ENCODE measurements at regions of chr16 and their contacts with region 1.

Region 1: DNA sequence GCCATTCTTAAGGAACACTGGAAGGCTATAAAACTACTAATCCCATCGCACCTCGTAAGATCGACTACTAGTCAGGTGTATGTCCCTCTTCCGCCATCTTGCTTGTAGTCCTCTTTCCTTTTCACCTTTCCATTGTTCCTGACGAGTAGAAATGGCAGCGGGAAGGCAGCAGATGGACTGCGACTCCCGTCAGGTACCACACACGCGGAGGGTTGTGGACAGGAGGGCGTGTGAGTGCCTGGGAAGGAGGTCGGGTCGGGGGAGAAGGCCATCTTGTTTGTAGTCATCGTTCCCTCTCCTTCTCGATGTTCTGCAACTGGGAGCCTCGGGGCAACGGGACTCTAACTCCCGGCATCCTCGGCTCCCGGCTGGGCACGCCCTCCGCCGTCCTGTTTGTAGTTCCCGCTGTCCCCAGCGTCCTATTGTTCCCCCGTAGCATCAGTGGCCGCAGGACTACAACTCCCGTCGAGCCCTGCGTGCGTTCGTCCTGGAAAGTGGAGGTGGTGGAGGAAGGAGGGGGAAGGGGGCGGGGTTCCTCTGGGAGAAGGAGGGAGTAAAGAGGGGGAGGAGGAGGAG is 324 bp upstream of the FBXL19 start:
- DNase-seq: peak; percentile 100
- H3K4me3 ChIP-seq: peak overlapping the region; percentile 54 to 76 (median 70)
- H3K27ac ChIP-seq: peak overlapping the region; percentile 94
- H3K4me1 ChIP-seq: peaks cover 11% of the 10 kb centered on the region
- H3K27me3 ChIP-seq: no peaks in the 10 kb centered on the region
- CTCF ChIP-seq: no peak

Region 2: DNA sequence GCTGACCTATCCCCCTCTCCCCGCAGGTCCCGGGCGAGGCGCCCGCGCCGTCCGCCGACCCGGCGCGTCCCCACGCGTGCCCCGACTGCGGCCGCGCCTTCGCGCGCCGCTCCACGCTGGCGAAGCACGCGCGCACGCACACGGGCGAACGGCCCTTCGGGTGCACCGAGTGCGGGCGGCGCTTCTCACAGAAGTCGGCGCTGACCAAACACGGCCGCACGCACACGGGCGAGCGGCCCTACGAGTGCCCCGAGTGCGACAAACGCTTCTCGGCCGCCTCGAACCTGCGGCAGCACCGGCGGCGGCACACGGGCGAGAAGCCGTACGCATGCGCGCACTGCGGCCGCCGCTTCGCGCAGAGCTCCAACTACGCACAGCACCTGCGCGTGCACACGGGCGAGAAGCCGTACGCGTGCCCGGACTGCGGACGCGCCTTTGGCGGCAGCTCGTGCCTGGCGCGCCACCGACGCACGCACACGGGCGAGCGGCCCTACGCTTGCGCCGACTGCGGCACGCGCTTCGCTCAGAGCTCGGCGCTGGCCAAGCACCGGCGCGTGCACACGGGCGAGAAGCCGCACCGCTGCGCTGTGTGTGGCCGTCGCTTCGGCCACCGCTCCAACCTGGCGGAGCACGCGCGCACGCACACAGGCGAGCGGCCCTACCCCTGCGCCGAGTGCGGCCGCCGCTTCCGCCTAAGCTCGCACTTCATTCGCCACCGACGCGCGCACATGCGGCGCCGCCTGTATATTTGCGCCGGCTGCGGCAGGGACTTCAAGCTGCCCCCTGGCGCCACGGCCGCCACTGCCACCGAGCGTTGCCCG is 505.3 kb before region 1 on chr16:
- CTCF ChIA-PET with region 1: no interaction called
- dilution Hi-C with region 1: no loop called
- in situ Hi-C with region 1: no loop called
- intact Hi-C with region 1: no loop called
- DNase-seq: peak; percentile 92
- H3K4me3 ChIP-seq: peak overlapping the region in 2 of 3 experiments; percentile 50 to 62
- H3K27ac ChIP-seq: no peak overlapping the region
- H3K4me1 ChIP-seq: peaks cover 13% of the 10 kb centered on the region
- H3K27me3 ChIP-seq: no peaks in the 10 kb centered on the region
- CTCF ChIP-seq: peak in 1 of 2 donors; percentile 22

Region 3: DNA sequence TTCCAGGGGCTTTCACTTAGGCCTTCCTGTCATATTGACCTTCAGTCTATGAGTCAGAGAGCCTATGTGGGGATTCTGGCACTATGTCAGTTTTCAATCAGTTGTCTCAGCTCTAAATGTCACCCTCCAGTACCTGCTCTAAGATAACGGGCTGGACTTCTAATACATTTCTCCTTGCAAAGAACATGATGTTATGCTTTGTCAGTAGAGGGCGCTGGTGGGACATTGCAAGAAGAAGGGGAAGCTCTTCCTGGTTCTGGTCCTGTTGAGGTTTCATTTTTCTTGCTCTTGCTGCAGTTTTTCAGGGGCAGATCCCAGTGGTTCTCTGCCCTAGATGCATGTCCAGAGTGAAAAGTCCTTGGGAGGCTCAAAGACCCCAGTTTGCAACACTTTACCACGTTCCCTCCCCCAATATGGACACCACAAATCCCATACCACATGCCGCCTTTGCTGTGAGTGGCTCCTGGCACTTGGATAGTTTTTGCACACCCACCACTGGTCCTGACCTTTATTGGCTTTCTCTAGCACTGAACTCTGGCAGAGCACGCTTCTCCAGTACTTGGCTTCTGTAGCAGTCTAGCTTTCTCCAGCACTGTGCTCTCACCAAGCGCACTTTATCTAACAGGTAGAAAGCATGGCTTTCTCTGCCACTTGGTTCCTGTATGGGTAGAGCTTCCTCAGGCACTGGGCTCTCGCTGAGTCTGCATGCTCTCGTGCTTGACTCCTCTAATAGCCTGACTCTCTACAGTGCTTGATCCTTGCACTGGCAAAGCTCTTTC is 78.2 kb before region 1 on chr16:
- CTCF ChIA-PET with region 1: no interaction called
- dilution Hi-C with region 1: no loop called
- in situ Hi-C with region 1: loop called in 1 of 2 experiments (anchors 10 kb)
- intact Hi-C with region 1: loop called (anchors 5 kb)
- DNase-seq: peak; percentile 68
- H3K4me3 ChIP-seq: no peak overlapping the region
- H3K27ac ChIP-seq: no peak overlapping the region
- H3K4me1 ChIP-seq: no peaks in the 10 kb centered on the region
- H3K27me3 ChIP-seq: no peaks in the 10 kb centered on the region
- CTCF ChIP-seq: peak; percentile 88 to 93

Region 4: DNA sequence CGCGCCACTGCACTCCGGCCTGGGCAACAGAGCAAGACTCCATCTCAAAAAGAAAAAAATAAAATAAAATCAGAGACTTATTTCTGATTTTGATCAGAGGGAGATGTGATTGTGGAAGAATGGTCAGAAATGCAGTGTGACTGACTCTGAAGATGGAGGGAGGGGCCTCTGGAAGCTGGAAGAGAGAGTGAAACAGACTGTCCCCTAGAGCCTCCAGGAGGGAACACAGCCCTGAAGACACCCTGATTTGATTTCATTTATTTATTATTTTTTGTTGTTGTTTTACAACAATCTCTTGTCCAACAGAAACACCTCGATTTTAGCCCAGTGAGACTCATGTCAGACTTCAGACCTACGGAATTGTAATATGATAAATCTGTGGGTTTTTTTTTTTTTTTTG is 55.3 kb before region 1 on chr16:
- CTCF ChIA-PET with region 1: no interaction called
- dilution Hi-C with region 1: no loop called
- in situ Hi-C with region 1: no loop called
- intact Hi-C with region 1: no loop called
- DNase-seq: no peak
- H3K4me3 ChIP-seq: no peak overlapping the region
- H3K27ac ChIP-seq: no peak overlapping the region
- H3K4me1 ChIP-seq: no peaks in the 10 kb centered on the region
- H3K27me3 ChIP-seq: no peaks in the 10 kb centered on the region
- CTCF ChIP-seq: peak in 1 of 2 donors; percentile 25

Region 5: DNA sequence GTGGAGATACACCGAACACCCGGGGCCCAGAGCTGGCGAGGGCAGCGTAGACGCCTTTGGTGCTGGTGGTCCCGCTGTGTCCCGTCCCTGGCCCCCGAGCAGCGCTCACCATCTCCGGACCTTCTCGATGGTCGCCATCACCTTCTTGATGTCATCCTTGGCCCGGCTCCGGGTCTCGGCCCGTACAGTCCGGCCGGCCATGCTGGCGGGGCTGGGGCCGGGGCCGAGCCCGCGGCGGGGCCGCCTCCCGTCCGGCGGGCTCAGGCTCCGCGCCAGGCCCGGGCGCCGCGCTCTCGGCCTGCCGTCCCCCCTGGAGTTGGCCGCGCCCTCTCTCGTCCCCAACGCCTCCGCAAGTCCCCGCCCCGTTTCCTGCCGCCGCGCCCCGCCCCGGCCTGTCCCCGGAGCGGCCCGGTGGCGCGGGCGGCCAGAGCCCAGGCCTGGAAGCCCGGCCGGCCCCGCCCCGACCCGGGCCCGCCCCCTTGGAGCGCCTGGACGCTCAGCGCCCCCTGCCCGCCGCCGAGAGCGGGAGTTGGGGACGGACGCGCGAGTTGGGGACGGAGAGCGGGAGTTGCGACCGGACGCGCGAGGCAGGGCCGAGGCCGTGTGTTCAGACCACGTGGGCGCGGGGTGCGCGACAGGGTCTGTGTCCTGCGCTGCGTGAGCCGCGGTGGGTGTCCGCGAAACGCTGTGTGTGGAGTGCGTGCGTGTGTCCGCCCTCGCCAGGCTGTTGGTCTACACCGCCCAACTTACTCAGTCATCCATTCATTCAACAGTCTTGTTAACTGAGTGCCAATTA is 29.1 kb before region 1 on chr16 and contains the start of gene BCL7C:
- CTCF ChIA-PET with region 1: no interaction called
- dilution Hi-C with region 1: no loop called
- in situ Hi-C with region 1: no loop called
- intact Hi-C with region 1: loop called (anchors 1 kb)
- DNase-seq: peak; percentile 87
- H3K4me3 ChIP-seq: peak within 1 kb of the TSS; percentile 54 to 86 (median 81)
- H3K27ac ChIP-seq: peak within 1 kb of the TSS; percentile 33
- H3K4me1 ChIP-seq: peaks cover 38% of the 10 kb centered on the region
- H3K27me3 ChIP-seq: no peaks in the 10 kb centered on the region
- CTCF ChIP-seq: peak; percentile 4 to 54
- total RNA-seq, gene BCL7C: 26.1 to 28.5 TPM

Region 6: GRCh38 chr16:30948667-30949649 is 25.9 kb after region 1 on chr16 and contains the start of gene ORAI3:
- CTCF ChIA-PET with region 1: no interaction called
- dilution Hi-C with region 1: no loop called
- in situ Hi-C with region 1: no loop called
- intact Hi-C with region 1: loop called (anchors 2 kb)
- DNase-seq: peak; percentile 60
- H3K4me3 ChIP-seq: peak within 1 kb of the TSS; percentile 63 to 76 (median 65)
- H3K27ac ChIP-seq: peak within 1 kb of the TSS; percentile 69
- H3K4me1 ChIP-seq: peaks cover 24% of the 10 kb centered on the region
- H3K27me3 ChIP-seq: no peaks in the 10 kb centered on the region
- CTCF ChIP-seq: no peak
- total RNA-seq, gene ORAI3: 31.7 to 37.2 TPM

Region 7: DNA sequence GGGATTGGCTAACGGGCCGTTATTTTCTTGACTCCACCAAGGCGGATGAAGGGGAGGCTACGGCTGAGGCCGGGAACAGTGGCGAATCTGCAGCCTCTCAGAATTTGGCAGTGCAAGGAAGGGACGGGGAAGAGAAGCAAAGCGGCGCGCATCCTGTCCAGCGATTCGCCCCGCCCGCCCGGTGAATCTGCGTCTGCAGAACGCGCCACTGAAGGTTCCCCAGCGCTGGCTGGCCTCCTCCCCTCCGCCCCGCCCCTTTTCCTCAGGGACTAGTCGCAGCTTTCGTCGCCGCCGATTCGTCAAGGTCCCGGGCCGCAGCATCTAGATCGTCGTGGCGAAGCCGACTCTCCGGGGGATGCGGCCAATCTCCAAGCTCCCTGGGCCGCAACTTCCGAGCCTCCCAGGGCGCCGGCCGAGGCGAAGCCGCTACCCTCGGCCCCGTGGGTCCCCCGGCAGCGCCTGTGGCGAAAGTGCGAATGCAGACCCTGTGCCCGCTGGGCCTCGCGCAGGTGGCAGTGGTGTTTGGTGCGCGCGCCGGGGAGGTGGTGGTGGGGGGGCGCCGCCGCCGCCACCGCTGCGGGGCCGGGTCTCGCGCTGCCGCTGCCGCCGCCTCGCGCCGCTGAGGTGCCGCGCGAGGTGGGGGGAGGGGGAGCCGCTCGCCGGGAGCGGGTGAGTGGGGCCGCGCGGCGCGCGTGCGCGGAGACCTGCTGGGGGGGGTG is 34.6 kb after region 1 on chr16 and contains the start of gene SETD1A:
- CTCF ChIA-PET with region 1: no interaction called
- dilution Hi-C with region 1: no loop called
- in situ Hi-C with region 1: no loop called
- intact Hi-C with region 1: loop called (anchors 1 kb)
- DNase-seq: peak; percentile 93
- H3K4me3 ChIP-seq: peak within 1 kb of the TSS; percentile 91 to 95 (median 93)
- H3K27ac ChIP-seq: peak within 1 kb of the TSS; percentile 91
- H3K4me1 ChIP-seq: peaks cover 15% of the 10 kb centered on the region
- H3K27me3 ChIP-seq: no peaks in the 10 kb centered on the region
- CTCF ChIP-seq: no peak
- total RNA-seq, gene SETD1A: 8.5 to 14.8 TPM

Measured in mammary epithelial cell (primary cell).